ENCODE measurements at regions of chr12 and their contacts with region 1.

Region 1: GRCh38 chr12:120265473-120266179 is at the start of gene PXN:
- DNase-seq: peak; percentile 74
- H3K4me3 ChIP-seq: peak within 1 kb of the TSS; percentile 60 to 91 (median 65)
- H3K27ac ChIP-seq: peak within 1 kb of the TSS; percentile 58
- H3K4me1 ChIP-seq: peaks cover 45% of the 10 kb centered on the region
- H3K27me3 ChIP-seq: no peaks in the 10 kb centered on the region
- CTCF ChIP-seq: peak; percentile 70 to 79
- POLR2A ChIP-seq: peak; percentile 55
- total RNA-seq, gene PXN: 228 and 258 TPM in 2 replicates

Region 2: GRCh38 chr12:120194534-120195395 is 70.9 kb before region 1 on chr12 and contains the start of gene GCN1:
- CTCF ChIA-PET with region 1: interaction called, 6 read pairs
- POLR2A ChIA-PET with region 1: interaction called, 76 read pairs
- dilution Hi-C with region 1: no loop called
- intact Hi-C with region 1: no loop called
- DNase-seq: peak; percentile 85
- H3K4me3 ChIP-seq: peak within 1 kb of the TSS; percentile 22 to 76 (median 67)
- H3K27ac ChIP-seq: peak within 1 kb of the TSS; percentile 74
- H3K4me1 ChIP-seq: peaks cover 48% of the 10 kb centered on the region
- H3K27me3 ChIP-seq: no peaks in the 10 kb centered on the region
- CTCF ChIP-seq: no peak
- POLR2A ChIP-seq: peak; percentile 59
- total RNA-seq, gene GCN1: 79.1 and 101 TPM in 2 replicates

Region 3: GRCh38 chr12:120216742-120217605 is 48.7 kb before region 1 on chr12:
- CTCF ChIA-PET with region 1: interaction called, 27 read pairs
- POLR2A ChIA-PET with region 1: no interaction called
- dilution Hi-C with region 1: no loop called
- intact Hi-C with region 1: no loop called
- DNase-seq: no peak
- H3K4me3 ChIP-seq: no peak overlapping the region
- H3K27ac ChIP-seq: no peak overlapping the region
- H3K4me1 ChIP-seq: no peaks in the 10 kb centered on the region
- H3K27me3 ChIP-seq: no peaks in the 10 kb centered on the region
- CTCF ChIP-seq: no peak
- POLR2A ChIP-seq: peak; percentile 25

Region 4: GRCh38 chr12:120242275-120242799 is 23.3 kb before region 1 on chr12:
- CTCF ChIA-PET with region 1: interaction called, 906 read pairs
- POLR2A ChIA-PET with region 1: interaction called, 29 read pairs
- dilution Hi-C with region 1: no loop called
- intact Hi-C with region 1: no loop called
- DNase-seq: peak; percentile 96
- H3K4me3 ChIP-seq: no peak overlapping the region
- H3K27ac ChIP-seq: peak overlapping the region; percentile 83
- H3K4me1 ChIP-seq: peaks cover 82% of the 10 kb centered on the region
- H3K27me3 ChIP-seq: no peaks in the 10 kb centered on the region
- CTCF ChIP-seq: no peak
- POLR2A ChIP-seq: peak; percentile 91

Region 5: DNA sequence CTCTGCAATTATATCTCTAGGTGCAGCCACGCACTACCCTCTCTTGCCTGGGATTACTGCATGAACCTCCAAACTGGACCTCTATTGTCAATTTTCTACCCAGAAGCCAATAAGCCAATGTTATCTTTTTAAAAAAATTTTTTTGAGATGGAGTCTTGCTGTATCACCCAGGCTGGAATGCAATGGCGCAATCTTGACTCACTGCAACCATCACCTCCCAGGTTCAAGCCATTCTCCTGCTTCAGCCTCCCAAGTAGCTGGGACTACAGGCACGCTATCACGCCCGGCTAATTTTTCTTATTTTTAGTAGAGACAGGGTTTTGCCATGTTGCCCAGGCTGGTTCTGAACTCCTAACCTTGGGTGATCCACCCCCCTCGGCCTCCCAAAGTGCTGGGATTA is 11.1 kb after region 1 on chr12:
- CTCF ChIA-PET with region 1: interaction called, 8 read pairs
- POLR2A ChIA-PET with region 1: interaction called, 11 read pairs
- dilution Hi-C with region 1: no loop called
- intact Hi-C with region 1: no loop called
- DNase-seq: no peak
- H3K4me3 ChIP-seq: no peak overlapping the region
- H3K27ac ChIP-seq: no peak overlapping the region
- H3K4me1 ChIP-seq: no peaks in the 10 kb centered on the region
- H3K27me3 ChIP-seq: no peaks in the 10 kb centered on the region
- CTCF ChIP-seq: no peak
- POLR2A ChIP-seq: no peak

Measured in endothelial cell of umbilical vein (primary cell).